ENCODE measurements at regions of chrX and their contacts with region 1.

Region 1: GRCh38 chrX:22534643-22535042 is 261.9 kb downstream of the CBLL2 start:
- DNase-seq: peak; percentile 10
- H3K4me3 ChIP-seq: no peak overlapping the region
- H3K27ac ChIP-seq: no peak overlapping the region
- H3K4me1 ChIP-seq: no peaks in the 10 kb centered on the region
- H3K27me3 ChIP-seq: no peaks in the 10 kb centered on the region
- CTCF ChIP-seq: no peak
- EP300 ChIP-seq: no peak
- POLR2A ChIP-seq: no peak

Region 2: DNA sequence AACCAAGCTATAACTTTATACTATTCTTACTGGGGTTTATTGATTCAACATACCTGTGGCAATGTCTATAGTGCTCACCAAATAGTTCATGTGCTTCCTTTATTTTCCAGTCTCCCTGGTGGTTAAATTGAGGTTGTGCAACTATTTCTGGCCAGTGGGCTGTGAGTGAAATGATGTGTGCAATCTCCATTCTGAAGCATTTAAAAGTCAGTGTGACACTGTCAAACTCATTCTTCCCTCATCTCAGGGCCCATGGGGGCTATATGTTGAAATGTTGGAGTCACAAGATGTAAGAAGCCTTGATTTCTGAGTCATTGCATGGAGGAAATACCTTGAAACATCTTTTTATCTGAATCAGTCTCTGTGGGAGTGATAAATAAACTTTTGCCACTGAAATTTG is 1853.6 kb before region 1 on chrX:
- in situ Hi-C with region 1: no loop called
- intact Hi-C with region 1: loop called (anchors 10 kb)
- DNase-seq: no peak
- H3K4me3 ChIP-seq: no peak overlapping the region
- H3K27ac ChIP-seq: no peak overlapping the region
- H3K4me1 ChIP-seq: no peaks in the 10 kb centered on the region
- H3K27me3 ChIP-seq: no peaks in the 10 kb centered on the region
- CTCF ChIP-seq: no peak
- EP300 ChIP-seq: no peak
- POLR2A ChIP-seq: no peak

Region 3: GRCh38 chrX:22467571-22467970 is 67.1 kb before region 1 on chrX:
- in situ Hi-C with region 1: no loop called
- intact Hi-C with region 1: no loop called
- DNase-seq: no peak
- H3K4me3 ChIP-seq: no peak overlapping the region
- H3K27ac ChIP-seq: no peak overlapping the region
- H3K4me1 ChIP-seq: no peaks in the 10 kb centered on the region
- H3K27me3 ChIP-seq: no peaks in the 10 kb centered on the region
- CTCF ChIP-seq: no peak
- EP300 ChIP-seq: no peak
- POLR2A ChIP-seq: no peak

Region 4: DNA sequence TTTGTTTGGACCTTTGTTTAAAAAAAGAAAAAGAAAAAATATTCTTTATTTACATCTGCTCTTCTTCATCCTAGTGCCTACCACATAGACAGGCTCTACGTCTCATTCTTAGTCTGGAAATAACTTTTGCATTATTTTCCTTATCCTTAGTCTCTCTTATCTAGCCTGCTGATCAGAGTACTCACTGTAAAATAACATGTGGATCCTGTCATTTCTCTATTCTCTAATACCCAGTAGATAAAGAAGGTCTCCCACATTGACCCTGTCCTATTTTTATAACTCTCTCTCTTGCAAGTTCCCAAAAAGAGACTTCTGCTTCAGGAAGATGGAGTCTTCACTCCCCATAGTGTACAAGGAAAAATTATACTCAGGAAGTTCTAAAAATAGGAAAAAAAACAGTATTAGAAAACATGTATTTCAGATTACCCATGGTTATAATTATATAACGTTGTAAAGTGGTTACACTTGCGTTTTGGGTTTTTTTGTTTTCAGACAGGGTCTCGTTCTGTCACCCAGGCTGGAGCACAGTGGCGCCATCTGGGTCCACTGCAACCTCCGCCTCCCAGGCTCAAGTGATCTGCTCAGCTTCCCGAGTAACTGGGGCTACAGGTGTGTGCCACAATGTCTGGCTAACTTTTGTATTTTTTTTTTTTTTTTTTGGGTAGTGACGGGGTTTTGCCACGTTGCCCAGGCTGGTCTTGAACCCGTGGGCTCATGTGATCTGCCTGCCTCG is 1638.6 kb after region 1 on chrX:
- in situ Hi-C with region 1: no loop called
- intact Hi-C with region 1: no loop called
- DNase-seq: no peak
- H3K4me3 ChIP-seq: no peak overlapping the region
- H3K27ac ChIP-seq: no peak overlapping the region
- H3K4me1 ChIP-seq: peaks cover 15 to 35% (median 22%) of the 10 kb centered on the region in 4 donors
- H3K27me3 ChIP-seq: no peaks in the 10 kb centered on the region
- CTCF ChIP-seq: no peak
- EP300 ChIP-seq: no peak
- POLR2A ChIP-seq: no peak